ENCODE measurements at regions of chr2 and their contacts with region 1.

Region 1: DNA sequence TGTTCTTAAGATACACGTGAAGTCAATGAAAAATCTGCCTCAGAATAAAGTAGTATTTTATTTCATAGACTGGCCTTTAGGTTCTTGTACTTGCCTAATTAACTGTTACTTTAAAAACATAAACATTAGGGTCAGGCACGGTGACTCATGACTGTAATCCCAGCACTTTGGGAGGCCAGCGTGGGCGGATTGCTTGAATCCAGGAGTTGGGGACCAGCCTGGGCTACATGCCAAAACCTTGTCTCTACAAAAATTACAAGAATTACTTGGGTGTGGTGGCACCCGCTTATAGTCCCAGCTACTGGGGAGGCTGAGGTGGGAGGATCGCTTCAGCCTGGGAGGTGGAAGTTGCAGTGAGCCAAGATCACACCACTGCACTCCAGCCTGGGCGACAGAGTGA is 16.0 kb upstream of the SNORC start:
- DNase-seq: peak; percentile 58
- H3K4me3 ChIP-seq: no peak overlapping the region
- H3K27me3 ChIP-seq: no peaks in the 10 kb centered on the region
- CTCF ChIP-seq: no peak

Region 2: GRCh38 chr2:232714969-232715368 is 139.1 kb before region 1 on chr2:
- CTCF ChIA-PET with region 1: no interaction called
- POLR2A ChIA-PET with region 1: no interaction called
- DNase-seq: no peak
- H3K4me3 ChIP-seq: no peak overlapping the region
- H3K27me3 ChIP-seq: no peaks in the 10 kb centered on the region
- CTCF ChIP-seq: no peak

Region 3: DNA sequence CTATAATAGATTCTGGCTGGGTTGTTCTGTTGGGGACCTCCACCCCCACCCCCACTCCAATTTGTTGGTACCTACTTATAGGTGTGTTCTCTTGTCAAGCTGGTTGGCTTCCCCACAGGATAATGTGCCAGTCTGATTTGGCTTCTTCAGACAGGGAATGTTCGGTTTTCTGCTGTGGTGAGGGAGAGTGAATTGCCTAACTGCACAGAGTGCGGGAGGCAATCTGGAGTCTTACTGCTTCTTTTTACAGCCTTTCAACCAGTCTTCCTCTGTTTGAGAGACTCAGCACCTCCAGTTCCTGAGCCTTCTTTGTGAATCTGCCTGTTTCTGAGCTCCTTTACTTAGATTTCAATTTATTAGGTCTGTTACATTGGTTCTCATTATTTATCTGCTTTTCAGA is 11.4 kb before region 1 on chr2:
- CTCF ChIA-PET with region 1: interaction called, 10 read pairs
- POLR2A ChIA-PET with region 1: no interaction called
- DNase-seq: no peak
- H3K4me3 ChIP-seq: no peak overlapping the region
- H3K27me3 ChIP-seq: no peaks in the 10 kb centered on the region
- CTCF ChIP-seq: no peak

Region 4: GRCh38 chr2:233029321-233029720 is 175.2 kb after region 1 on chr2:
- CTCF ChIA-PET with region 1: interaction called, 10 read pairs
- POLR2A ChIA-PET with region 1: no interaction called
- DNase-seq: no peak
- H3K4me3 ChIP-seq: no peak overlapping the region
- H3K27me3 ChIP-seq: no peaks in the 10 kb centered on the region; the same call in 1 of the 2 replicates
- CTCF ChIP-seq: no peak

Region 5: DNA sequence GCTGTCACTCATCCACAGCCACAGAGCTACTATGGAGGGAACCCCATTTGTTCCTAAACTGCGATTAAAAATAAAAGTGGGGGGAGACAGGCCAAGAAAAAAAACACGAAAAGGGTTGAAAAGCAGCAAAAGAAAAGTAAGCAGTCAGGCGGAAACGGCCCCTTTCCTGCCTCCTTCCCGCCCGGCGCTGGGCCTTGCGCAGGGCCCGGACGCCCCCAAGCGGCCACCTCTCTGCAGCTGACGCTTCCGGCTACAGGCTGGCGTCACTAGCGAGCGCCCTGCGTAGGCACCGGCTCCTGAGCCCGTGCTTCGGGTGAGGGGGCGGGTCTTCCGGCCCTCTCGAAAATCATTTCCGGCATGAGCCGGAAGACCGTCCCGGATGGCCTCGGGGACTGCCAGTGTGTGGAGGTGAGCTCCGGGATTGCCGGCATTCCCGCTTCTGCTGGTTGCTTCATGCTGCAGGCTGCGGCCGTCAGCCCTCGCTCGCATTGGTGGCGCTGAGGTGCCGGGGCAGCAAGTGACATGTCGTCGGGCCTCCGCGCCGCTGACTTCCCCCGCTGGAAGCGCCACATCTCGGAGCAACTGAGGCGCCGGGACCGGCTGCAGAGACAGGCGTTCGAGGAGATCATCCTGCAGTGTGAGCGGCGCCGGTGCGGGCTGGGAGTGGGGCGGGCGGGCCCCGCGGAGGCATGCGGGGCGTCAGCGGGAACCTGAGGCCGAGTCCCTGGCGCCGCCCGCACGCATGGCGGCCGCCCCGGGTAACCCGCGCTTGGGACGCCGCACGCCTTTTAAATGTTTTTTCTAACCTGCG is 397.4 kb after region 1 on chr2 and contains the start of gene ATG16L1:
- CTCF ChIA-PET with region 1: interaction called, 20 read pairs
- POLR2A ChIA-PET with region 1: interaction called, 3 read pairs
- DNase-seq: peak; percentile 65
- H3K4me3 ChIP-seq: peak within 1 kb of the TSS; percentile 87
- H3K27me3 ChIP-seq: no peaks in the 10 kb centered on the region
- CTCF ChIP-seq: peak; percentile 99
- polyA plus RNA-seq, gene ATG16L1: 26.4 and 29.2 TPM in 2 replicates